GM10248 (cell line): ENCODE measurements at regions of chr9 and their contacts with region 1.

Region 1: GRCh38 chr9:83334320-83334719 is 203.9 kb downstream of the FRMD3 start:
- DNase-seq: peak; percentile 35
- CTCF ChIP-seq: peak; percentile 89

Region 2: GRCh38 chr9:83315649-83316048 is 18.7 kb before region 1 on chr9:
- CTCF ChIA-PET with region 1: interaction called, 22 read pairs
- POLR2A ChIA-PET with region 1: no interaction called
- DNase-seq: no peak
- CTCF ChIP-seq: no peak

Region 3: DNA sequence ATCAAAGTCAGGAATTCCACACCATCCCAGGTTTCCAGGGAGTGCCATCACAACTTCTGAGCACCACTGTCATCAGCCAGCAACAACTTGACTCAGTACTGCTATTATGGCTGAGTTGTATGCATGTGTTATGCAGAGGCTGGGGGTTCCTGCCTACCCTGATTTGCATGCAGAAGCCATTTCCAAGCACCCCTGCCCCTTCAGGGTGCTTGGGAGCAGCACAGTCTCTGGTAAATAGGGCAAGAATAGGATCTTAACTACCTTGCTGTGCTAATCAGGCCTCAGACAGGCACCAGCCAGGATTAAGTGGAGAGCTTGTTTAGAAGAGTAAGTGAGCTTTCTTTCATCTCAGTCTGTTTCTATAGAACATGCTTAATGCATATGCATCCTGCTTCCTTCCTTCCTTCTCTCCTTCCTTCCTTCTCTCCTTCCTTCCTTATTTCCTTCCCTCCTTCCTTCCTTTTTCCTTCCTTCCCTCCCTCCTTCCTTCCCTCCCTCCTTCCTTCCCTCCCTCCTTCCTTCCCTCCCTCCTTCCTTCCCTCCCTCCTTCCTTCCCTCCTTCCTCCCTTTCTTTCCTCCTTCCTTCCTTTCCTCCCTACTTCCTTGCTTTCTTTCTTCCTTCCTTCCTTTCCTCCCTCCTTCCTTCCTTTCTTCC is 28.1 kb after region 1 on chr9:
- CTCF ChIA-PET with region 1: interaction called, 12 read pairs
- POLR2A ChIA-PET with region 1: no interaction called
- DNase-seq: no peak
- CTCF ChIP-seq: no peak

Region 4: GRCh38 chr9:83544002-83544698 is 209.8 kb after region 1 on chr9:
- CTCF ChIA-PET with region 1: interaction called, 219 read pairs
- POLR2A ChIA-PET with region 1: no interaction called
- DNase-seq: peak; percentile 63
- CTCF ChIP-seq: peak; percentile 71

Region 5: GRCh38 chr9:83622939-83623678 is 288.8 kb after region 1 on chr9 and contains the start of gene IDNK:
- CTCF ChIA-PET with region 1: interaction called, 11 read pairs
- POLR2A ChIA-PET with region 1: no interaction called
- DNase-seq: peak; percentile 82
- CTCF ChIP-seq: no peak